ENCODE measurements at regions of chr1 and their contacts with region 1.

Region 1: GRCh38 chr1:155084722-155085503 is 6.3 kb downstream of the EFNA3 start:
- DNase-seq: peak; percentile 97
- ATAC-seq: peak; percentile 67
- H3K4me3 Mint-ChIP-seq: peak overlapping the region; percentile 95
- H3K27ac Mint-ChIP-seq: peak overlapping the region; percentile 74
- H3K4me1 Mint-ChIP-seq: peaks cover 35% of the 10 kb centered on the region
- H3K27me3 Mint-ChIP-seq: peaks cover 45% of the 10 kb centered on the region
- CTCF ChIP-seq: peak; percentile 90

Region 2: GRCh38 chr1:154974063-154974807 is 110.7 kb before region 1 on chr1 and contains the start of gene CKS1B:
- CTCF ChIA-PET with region 1: interaction called, 28 read pairs
- POLR2A ChIA-PET with region 1: interaction called, 4 read pairs
- DNase-seq: peak; percentile 96
- ATAC-seq: peak; percentile 62
- H3K4me3 Mint-ChIP-seq: no peak within 1 kb of the TSS
- H3K27ac Mint-ChIP-seq: no peak within 1 kb of the TSS
- H3K4me1 Mint-ChIP-seq: peaks cover 28% of the 10 kb centered on the region
- H3K27me3 Mint-ChIP-seq: no peaks in the 10 kb centered on the region
- CTCF ChIP-seq: no peak
- total RNA-seq, gene CKS1B: 258 to 301 TPM (median 278 TPM) in 3 replicates

Region 3: DNA sequence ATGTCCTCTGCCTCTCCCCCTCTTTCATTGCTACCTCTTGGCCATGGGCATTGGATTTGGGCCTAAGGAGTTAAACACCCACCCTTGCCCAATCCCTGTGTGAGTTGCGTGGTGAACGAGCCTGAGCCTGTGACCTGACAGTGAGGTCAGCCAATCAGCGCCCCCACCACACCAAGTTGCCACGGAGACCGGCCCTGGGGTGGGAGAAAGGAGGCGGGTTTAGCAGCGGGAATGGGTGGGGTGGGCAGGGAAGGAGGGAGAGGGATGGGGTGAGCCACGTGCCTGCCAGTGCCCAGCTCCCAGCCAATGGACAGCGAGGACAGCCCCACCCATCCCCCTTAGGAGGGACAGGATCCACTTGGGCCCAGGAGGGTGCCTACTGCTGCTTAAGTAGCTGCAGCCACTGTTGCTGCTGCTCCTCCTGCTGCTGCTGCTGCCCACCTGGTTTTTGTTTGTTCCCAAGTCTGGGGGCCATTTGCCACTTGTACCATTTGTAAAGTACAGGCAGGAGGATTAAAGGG is 72.8 kb before region 1 on chr1:
- CTCF ChIA-PET with region 1: interaction called, 18 read pairs
- POLR2A ChIA-PET with region 1: interaction called, 3 read pairs
- DNase-seq: peak; percentile 88
- ATAC-seq: peak; percentile 78
- H3K4me3 Mint-ChIP-seq: peak overlapping the region; percentile 45
- H3K27ac Mint-ChIP-seq: peak overlapping the region; percentile 95
- H3K4me1 Mint-ChIP-seq: peaks cover 49% of the 10 kb centered on the region
- H3K27me3 Mint-ChIP-seq: no peaks in the 10 kb centered on the region
- CTCF ChIP-seq: no peak

Region 4: DNA sequence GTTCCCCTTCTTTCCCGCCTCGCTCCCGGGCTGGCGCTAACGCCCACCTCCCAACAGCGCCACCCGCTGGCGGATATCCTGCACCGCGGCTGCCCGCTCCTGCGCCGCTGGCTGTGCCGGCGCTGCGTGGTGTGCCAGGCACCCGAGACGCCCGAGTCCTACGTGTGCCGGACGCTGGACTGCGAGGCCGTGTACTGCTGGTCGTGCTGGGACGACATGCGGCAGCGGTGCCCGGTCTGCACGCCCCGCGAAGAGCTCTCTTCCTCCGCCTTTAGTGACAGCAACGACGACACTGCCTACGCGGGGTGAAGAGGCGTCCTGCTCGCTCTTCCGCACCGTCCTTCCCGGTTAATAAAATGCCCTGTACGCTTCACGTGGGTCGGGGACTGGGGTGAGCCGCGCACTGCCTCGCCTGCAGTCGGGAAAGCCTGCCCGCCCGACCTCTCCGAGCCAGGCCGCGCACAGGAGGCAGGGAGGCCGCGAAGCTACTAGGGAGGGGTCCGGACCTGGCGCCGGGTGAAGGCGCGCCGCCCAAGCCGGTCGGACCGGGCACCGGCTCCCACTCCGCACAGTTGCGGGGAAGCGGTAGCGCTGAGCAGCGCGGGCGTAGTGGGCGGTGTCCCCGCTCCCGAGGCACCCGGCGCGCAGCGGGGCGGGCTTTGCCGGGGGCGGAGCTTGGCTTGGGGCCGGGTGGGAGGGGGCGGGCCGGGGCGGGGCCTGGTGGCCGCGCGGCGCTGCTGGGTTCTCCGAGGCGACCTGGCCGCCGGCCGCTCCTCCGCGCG is 34.2 kb before region 1 on chr1 and contains the start of gene ADAM15:
- CTCF ChIA-PET with region 1: interaction called, 88 read pairs
- POLR2A ChIA-PET with region 1: interaction called, 3 read pairs
- DNase-seq: peak; percentile 92
- ATAC-seq: peak; percentile 72
- H3K4me3 Mint-ChIP-seq: peak within 1 kb of the TSS; percentile 82
- H3K27ac Mint-ChIP-seq: peak within 1 kb of the TSS; percentile 72; the same call in 1 of the 2 replicates
- H3K4me1 Mint-ChIP-seq: peaks cover 33% of the 10 kb centered on the region
- H3K27me3 Mint-ChIP-seq: peaks cover 20% of the 10 kb centered on the region
- CTCF ChIP-seq: peak; percentile 97
- total RNA-seq, gene ADAM15: 32.1 to 38.4 TPM (median 33.2 TPM) in 3 replicates

Region 5: DNA sequence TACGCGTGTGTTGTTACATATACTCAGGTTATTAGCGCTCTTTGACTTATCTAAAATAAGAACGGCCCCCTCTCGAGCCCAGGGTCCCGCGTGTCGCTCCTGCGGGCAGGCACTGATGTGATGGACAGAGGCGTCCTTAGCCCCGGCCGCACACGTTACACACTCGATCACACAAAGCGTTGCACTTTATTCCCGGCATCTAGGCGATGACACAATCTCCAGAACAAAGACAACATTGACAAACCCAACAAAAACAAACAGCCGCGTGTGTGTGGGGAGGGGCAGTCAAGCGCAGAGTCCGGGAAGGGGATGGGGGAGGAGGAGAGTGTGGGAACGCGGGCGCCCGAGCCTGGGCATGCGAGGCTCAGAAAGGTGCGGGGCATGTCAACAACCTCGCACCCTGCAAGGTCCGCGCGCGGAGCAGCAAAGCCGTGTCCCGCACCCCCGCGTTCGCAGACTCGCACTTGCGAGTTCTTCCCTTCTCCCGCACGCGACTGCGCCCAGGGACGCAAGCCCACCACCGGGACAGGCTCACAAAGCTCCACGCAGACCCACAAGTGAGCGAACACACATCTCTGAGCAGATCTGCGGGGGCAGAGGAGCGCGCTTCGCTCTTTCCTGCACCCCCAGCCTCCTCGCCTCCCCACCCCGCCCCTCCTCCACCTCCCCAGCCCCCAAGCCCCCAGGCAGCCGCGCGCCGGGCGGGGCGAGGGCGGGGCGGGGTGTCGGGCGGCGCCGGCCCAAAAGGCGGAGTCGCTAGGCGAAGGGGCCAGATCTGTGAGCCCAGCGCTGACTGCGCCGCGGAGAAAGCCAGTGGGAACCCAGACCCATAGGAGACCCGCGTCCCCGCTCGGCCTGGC is 42.4 kb after region 1 on chr1 and contains the start of gene EFNA1:
- CTCF ChIA-PET with region 1: interaction called, 152 read pairs
- POLR2A ChIA-PET with region 1: interaction called, 4 read pairs
- DNase-seq: peak; percentile 61
- ATAC-seq: peak; percentile 24
- H3K4me3 Mint-ChIP-seq: peak within 1 kb of the TSS; percentile 90
- H3K27ac Mint-ChIP-seq: no peak within 1 kb of the TSS; the same call in 1 of the 2 replicates
- H3K4me1 Mint-ChIP-seq: peaks cover 55% of the 10 kb centered on the region
- H3K27me3 Mint-ChIP-seq: peaks cover 55% of the 10 kb centered on the region
- CTCF ChIP-seq: no peak
- total RNA-seq, gene EFNA1: 6.0 to 7.3 TPM (median 6.5 TPM) in 3 replicates

Region 6: DNA sequence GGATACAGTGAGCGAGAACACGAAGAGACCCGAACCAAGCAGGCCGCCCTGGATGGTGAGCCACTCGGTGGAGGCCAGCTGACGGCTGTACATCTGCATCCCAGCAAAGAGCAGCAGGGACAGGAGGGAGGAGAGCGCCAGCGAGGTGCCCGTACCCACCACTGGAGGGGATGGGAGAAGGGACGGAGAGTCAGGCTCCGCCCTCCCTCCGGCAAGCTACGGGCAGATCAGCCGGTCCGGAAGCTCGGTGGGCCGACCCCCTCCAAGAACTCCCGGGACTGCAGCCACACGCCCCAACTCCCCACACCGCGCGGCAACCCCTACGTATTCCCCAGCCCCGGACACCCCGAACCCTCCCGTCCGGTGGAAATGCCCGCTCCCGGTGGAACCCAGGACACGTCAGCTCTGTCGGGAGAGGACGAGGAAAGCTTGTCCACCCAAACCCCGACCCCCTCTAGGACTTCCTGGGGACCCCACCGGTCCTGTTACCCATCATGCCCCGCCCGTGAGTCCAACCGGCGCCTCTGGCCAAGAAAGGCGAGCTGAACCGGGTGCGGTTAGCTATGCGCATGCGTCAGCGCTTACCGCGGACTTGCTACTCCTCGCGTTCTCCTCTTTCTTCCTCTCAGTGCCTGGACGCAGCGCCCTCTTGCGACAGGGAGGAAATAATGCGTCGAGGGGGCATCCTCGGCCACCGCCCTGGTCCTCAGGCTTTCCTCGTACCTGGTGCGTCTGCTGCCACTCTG is 88.0 kb after region 1 on chr1 and contains the start of gene KRTCAP2:
- CTCF ChIA-PET with region 1: interaction called, 605 read pairs
- POLR2A ChIA-PET with region 1: interaction called, 3 read pairs
- DNase-seq: peak; percentile 97
- ATAC-seq: peak; percentile 64
- H3K4me3 Mint-ChIP-seq: peak within 1 kb of the TSS; percentile 94
- H3K27ac Mint-ChIP-seq: peak within 1 kb of the TSS; percentile 95
- H3K4me1 Mint-ChIP-seq: peaks cover 29% of the 10 kb centered on the region
- H3K27me3 Mint-ChIP-seq: no peaks in the 10 kb centered on the region
- CTCF ChIP-seq: peak; percentile 88
- total RNA-seq, gene KRTCAP2: 104 to 161 TPM (median 147 TPM) in 3 replicates

Measured in WTC11 (cell line).